ENCODE measurements at regions of chr13 and their contacts with region 1.

Region 1: GRCh38 chr13:52652196-52652979 is at the start of gene SUGT1:
- DNase-seq: peak; percentile 90 to 96
- H3K4me3 ChIP-seq: peak within 1 kb of the TSS; percentile 89 to 98 (median 95)
- H3K27ac ChIP-seq: peak within 1 kb of the TSS; percentile 99
- H3K4me1 ChIP-seq: peaks cover 0 to 5% (median 0%) of the 10 kb centered on the region in 4 experiments; a peak in 3 of 7 replicates
- H3K27me3 ChIP-seq: no peaks in the 10 kb centered on the region
- CTCF ChIP-seq: peak; percentile 53 to 78 (median 72)
- EP300 ChIP-seq: no peak; a peak in 1 of 3 replicates
- POLR2A ChIP-seq: peak; percentile 85 to 95
- RAD21 ChIP-seq: peak; percentile 19 to 44; a peak in 3 of 4 replicates
- total RNA-seq, gene SUGT1: 99.4 and 103 TPM in 2 replicates

Region 2: GRCh38 chr13:52366291-52366690 is 286.1 kb before region 1 on chr13:
- CTCF ChIA-PET with region 1: no interaction called
- POLR2A ChIA-PET with region 1: no interaction called
- DNase-seq: no peak
- H3K4me3 ChIP-seq: no peak overlapping the region
- H3K27ac ChIP-seq: no peak overlapping the region
- H3K4me1 ChIP-seq: no peaks in the 10 kb centered on the region
- H3K27me3 ChIP-seq: no peaks in the 10 kb centered on the region
- CTCF ChIP-seq: no peak
- EP300 ChIP-seq: no peak
- POLR2A ChIP-seq: no peak
- RAD21 ChIP-seq: no peak

Region 3: GRCh38 chr13:52450012-52450792 is 202.2 kb before region 1 on chr13 and contains the start of gene VPS36:
- CTCF ChIA-PET with region 1: no interaction called
- POLR2A ChIA-PET with region 1: interaction called, 11 read pairs
- DNase-seq: peak; percentile 78 to 98
- H3K4me3 ChIP-seq: peak within 1 kb of the TSS; percentile 62 to 92 (median 90)
- H3K27ac ChIP-seq: peak within 1 kb of the TSS; percentile 60
- H3K4me1 ChIP-seq: peaks cover 2 to 6% (median 3%) of the 10 kb centered on the region in 4 experiments; a peak in 3 of 7 replicates
- H3K27me3 ChIP-seq: no peaks in the 10 kb centered on the region
- CTCF ChIP-seq: peak; percentile 89 to 99 (median 98)
- EP300 ChIP-seq: peak in 1 of 2 experiments; percentile 18; a peak in 1 of 3 replicates
- POLR2A ChIP-seq: peak; percentile 94
- RAD21 ChIP-seq: peak; percentile 77 to 94
- total RNA-seq, gene VPS36: 19.8 and 22.5 TPM in 2 replicates

Region 4: GRCh38 chr13:52599848-52600603 is 52.4 kb before region 1 on chr13:
- CTCF ChIA-PET with region 1: interaction called, 3 read pairs
- POLR2A ChIA-PET with region 1: interaction called, 19 read pairs
- DNase-seq: peak in 1 of 2 experiments; percentile 75
- H3K4me3 ChIP-seq: peak overlapping the region; percentile 16 to 59 (median 34); a peak in 7 of 8 replicates
- H3K27ac ChIP-seq: no peak overlapping the region
- H3K4me1 ChIP-seq: peaks cover 0 to 5% (median 0%) of the 10 kb centered on the region in 4 experiments; a peak in 1 of 7 replicates
- H3K27me3 ChIP-seq: peaks cover 0 to 18% (median 6%) of the 10 kb centered on the region in 4 experiments; a peak in 4 of 7 replicates
- CTCF ChIP-seq: no peak
- EP300 ChIP-seq: no peak
- POLR2A ChIP-seq: peak in 1 of 2 experiments; percentile 48; a peak in 1 of 3 replicates
- RAD21 ChIP-seq: no peak

Region 5: DNA sequence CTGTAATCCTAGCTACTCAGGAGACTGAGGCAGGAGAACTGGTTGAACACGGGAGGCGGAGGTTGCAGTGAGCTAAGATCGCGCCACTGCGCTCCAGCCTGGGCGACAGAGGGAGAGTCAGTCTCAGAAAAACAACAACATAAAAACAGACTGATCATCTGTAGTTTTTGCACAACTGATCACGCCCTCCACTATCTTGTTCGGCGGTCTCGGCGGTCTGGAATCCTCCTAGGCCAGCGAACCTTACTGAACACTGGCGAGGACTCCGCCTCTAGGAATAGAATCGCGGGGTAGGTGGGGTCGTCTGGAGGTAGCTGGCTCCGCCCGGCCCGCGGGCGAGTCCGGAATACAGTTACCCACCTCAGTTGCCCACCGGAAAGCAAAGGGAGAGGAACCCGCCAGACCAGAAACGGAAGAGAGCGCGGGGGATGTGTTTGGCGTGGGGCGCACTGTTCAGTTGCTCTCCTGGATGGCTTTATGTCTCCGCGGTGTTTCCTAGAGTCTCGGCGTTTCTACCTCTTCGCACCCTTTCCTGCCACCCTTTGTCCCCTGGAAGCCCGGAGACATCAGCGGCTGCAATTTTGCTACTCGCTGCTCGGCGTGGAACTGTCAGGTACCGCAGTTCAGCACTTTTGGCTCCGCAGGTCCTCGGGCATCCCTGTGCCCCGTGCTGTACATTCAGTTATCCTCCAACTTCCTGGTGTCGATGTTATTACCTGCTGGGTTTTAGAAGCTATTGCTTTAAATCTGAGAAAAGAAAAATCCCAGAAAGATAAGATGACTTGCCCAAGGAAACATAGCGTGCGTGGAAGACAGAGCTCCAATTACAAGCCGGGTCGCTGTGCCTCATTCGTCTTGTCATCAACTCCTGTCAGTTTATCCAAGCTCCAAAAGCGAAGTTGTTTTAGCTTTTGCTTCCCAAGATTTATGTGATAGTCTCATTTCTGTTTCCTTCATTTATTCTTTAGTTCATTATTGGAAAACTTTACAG is 35.0 kb before region 1 on chr13:
- CTCF ChIA-PET with region 1: interaction called, 12 read pairs
- POLR2A ChIA-PET with region 1: interaction called, 34 read pairs
- DNase-seq: peak; percentile 57 to 87
- H3K4me3 ChIP-seq: peak overlapping the region; percentile 71 to 99 (median 93)
- H3K27ac ChIP-seq: no peak overlapping the region
- H3K4me1 ChIP-seq: no peaks in the 10 kb centered on the region
- H3K27me3 ChIP-seq: no peaks in the 10 kb centered on the region
- CTCF ChIP-seq: no peak
- EP300 ChIP-seq: no peak
- POLR2A ChIP-seq: peak in 1 of 2 experiments; percentile 83; a peak in 2 of 3 replicates
- RAD21 ChIP-seq: 0 out of 4 replicates have a peak, but pooled peaks of 1 of the 2 experiments have one; percentile 16

Region 6: DNA sequence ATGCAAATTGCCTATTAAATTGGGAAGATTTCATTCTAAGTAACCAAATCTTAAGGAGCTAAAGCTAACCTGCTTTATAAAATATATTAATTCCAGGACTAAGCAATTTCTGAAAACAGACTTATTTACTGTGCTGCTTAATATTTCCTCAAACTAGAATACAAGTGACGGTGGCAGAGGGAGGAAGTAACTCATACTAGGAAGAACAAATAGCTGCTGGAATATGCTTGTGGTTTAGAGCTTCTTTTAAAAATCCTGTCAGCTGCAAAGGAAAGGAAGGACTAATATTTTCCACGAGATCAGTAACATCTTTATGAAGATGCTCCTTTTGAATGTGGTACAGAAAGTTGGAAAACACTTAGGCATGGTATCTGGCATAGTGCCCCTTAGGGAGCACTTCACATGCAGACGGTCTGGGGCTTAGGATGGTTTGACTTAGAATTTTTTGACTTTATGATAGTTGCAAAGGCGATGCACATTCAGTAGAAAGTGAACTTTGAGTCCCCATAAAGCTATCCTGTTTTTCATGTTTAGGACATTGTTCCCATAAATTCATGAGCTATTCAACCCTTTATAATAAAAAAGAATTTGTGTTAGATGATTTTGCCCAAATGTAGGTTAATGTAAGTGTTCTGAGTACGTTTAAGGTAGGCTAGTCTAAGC is 13.6 kb before region 1 on chr13:
- CTCF ChIA-PET with region 1: interaction called, 7 read pairs
- POLR2A ChIA-PET with region 1: interaction called, 25 read pairs
- DNase-seq: no peak
- H3K4me3 ChIP-seq: no peak overlapping the region
- H3K27ac ChIP-seq: no peak overlapping the region
- H3K4me1 ChIP-seq: no peaks in the 10 kb centered on the region
- H3K27me3 ChIP-seq: no peaks in the 10 kb centered on the region
- CTCF ChIP-seq: no peak
- EP300 ChIP-seq: no peak
- POLR2A ChIP-seq: no peak
- RAD21 ChIP-seq: no peak

Region 7: GRCh38 chr13:52665325-52665724 is 12.9 kb after region 1 on chr13:
- CTCF ChIA-PET with region 1: interaction called, 22 read pairs
- POLR2A ChIA-PET with region 1: interaction called, 31 read pairs
- DNase-seq: no peak
- H3K4me3 ChIP-seq: no peak overlapping the region
- H3K27ac ChIP-seq: no peak overlapping the region
- H3K4me1 ChIP-seq: no peaks in the 10 kb centered on the region
- H3K27me3 ChIP-seq: no peaks in the 10 kb centered on the region
- CTCF ChIP-seq: peak in 2 of 3 experiments; percentile 23 to 37; a peak in 2 of 4 replicates
- EP300 ChIP-seq: no peak
- POLR2A ChIP-seq: no peak
- RAD21 ChIP-seq: peak in 1 of 2 experiments; percentile 54; a peak in 3 of 4 replicates

Region 8: GRCh38 chr13:52738719-52739467 is 86.5 kb after region 1 on chr13:
- CTCF ChIA-PET with region 1: interaction called, 10 read pairs
- POLR2A ChIA-PET with region 1: interaction called, 25 read pairs
- DNase-seq: peak in 1 of 2 experiments; percentile 82
- H3K4me3 ChIP-seq: peak overlapping the region; percentile 63 to 76 (median 69)
- H3K27ac ChIP-seq: peak overlapping the region; percentile 53; the same call in 1 of the 2 replicates
- H3K4me1 ChIP-seq: peaks cover 3 to 20% (median 18%) of the 10 kb centered on the region in 4 experiments
- H3K27me3 ChIP-seq: no peaks in the 10 kb centered on the region
- CTCF ChIP-seq: peak; percentile 63 to 94 (median 65)
- EP300 ChIP-seq: no peak; a peak in 1 of 3 replicates
- POLR2A ChIP-seq: peak in 1 of 2 experiments; percentile 59; a peak in 2 of 3 replicates
- RAD21 ChIP-seq: peak; percentile 27 to 66

Region 9: GRCh38 chr13:53144826-53145225 is 492.4 kb after region 1 on chr13:
- CTCF ChIA-PET with region 1: no interaction called
- POLR2A ChIA-PET with region 1: no interaction called
- DNase-seq: no peak
- H3K4me3 ChIP-seq: no peak overlapping the region
- H3K27ac ChIP-seq: no peak overlapping the region
- H3K4me1 ChIP-seq: peaks cover 0 to 2% (median 0%) of the 10 kb centered on the region in 4 experiments; a peak in 2 of 7 replicates
- H3K27me3 ChIP-seq: no peaks in the 10 kb centered on the region
- CTCF ChIP-seq: no peak
- EP300 ChIP-seq: no peak
- POLR2A ChIP-seq: no peak
- RAD21 ChIP-seq: no peak